Naive thymus-derived CD4-positive, alpha-beta T cell (primary cell): ENCODE measurements at regions of chr1 and their contacts with region 1.

Region 1: DNA sequence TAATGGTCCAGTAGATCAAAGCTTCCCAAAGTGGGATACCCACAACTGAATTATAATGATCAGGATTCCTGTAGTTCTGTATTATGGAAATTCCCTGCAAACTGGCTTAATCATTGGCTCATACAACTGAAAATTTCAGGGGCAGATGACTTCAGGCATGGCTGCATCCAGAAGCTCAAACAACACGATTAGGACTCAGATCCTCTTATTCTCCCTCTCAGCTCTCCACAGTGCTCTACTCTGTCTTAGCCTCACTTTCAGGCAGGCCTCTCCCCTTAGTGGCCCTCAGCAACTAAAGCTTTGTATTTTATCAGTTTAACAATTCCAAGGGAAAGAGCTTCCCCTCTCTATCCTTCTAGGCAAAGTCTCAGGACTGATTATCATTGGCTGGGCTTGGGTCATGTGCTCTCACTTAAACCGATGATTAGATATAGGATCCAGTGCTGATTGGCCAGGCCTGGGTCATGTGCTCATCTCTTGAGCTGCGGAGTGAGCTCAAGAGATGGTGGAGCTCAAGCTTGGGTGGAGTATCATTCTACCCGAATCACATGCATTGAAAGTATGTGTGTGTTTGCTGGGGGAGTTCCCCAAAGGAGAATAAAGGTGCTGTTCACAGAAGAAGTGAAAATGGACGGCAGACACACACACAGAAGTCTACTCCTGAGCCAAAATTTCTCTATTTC is 57.9 kb upstream of the RUNX3 start:
- DNase-seq: no peak
- ATAC-seq: peak; percentile 78
- H3K4me3 ChIP-seq: no peak overlapping the region
- H3K4me3 Mint-ChIP-seq: peak overlapping the region in 8 of 10 donors; percentile 6 to 80 (median 58)
- H3K27ac ChIP-seq: no peak overlapping the region
- H3K27ac Mint-ChIP-seq: peak overlapping the region; percentile 49 to 100 (median 81)
- H3K4me1 ChIP-seq: peaks cover 66 to 96% of the 10 kb centered on the region in 2 donors
- H3K4me1 Mint-ChIP-seq: peaks cover 78 to 99% (median 92%) of the 10 kb centered on the region in 7 donors
- H3K27me3 ChIP-seq: no peaks in the 10 kb centered on the region
- H3K27me3 Mint-ChIP-seq: peaks cover 0 to 10% (median 0%) of the 10 kb centered on the region in 5 donors

Region 2: GRCh38 chr1:24635195-24635843 is 352.7 kb before region 1 on chr1:
- CTCF ChIA-PET with region 1: no interaction called
- POLR2A ChIA-PET with region 1: no interaction called
- intact Hi-C with region 1: no loop called
- DNase-seq: peak in 7 of 9 donors; percentile 39 to 69 (median 62)
- ATAC-seq: peak; percentile 85
- H3K4me3 ChIP-seq: no peak overlapping the region
- H3K4me3 Mint-ChIP-seq: no peak overlapping the region
- H3K27ac ChIP-seq: no peak overlapping the region
- H3K27ac Mint-ChIP-seq: peak overlapping the region in 5 of 9 donors; percentile 0 to 77 (median 64)
- H3K4me1 ChIP-seq: no peaks in the 10 kb centered on the region
- H3K4me1 Mint-ChIP-seq: peaks cover 2 to 14% (median 8%) of the 10 kb centered on the region in 7 donors
- H3K27me3 ChIP-seq: no peaks in the 10 kb centered on the region
- H3K27me3 Mint-ChIP-seq: peaks cover 4 to 21% (median 8%) of the 10 kb centered on the region in 5 donors

Region 3: GRCh38 chr1:24806588-24806987 is 181.4 kb before region 1 on chr1:
- CTCF ChIA-PET with region 1: no interaction called
- POLR2A ChIA-PET with region 1: no interaction called
- intact Hi-C with region 1: no loop called
- DNase-seq: no peak
- ATAC-seq: no peak
- H3K4me3 ChIP-seq: no peak overlapping the region
- H3K4me3 Mint-ChIP-seq: no peak overlapping the region
- H3K27ac ChIP-seq: no peak overlapping the region
- H3K27ac Mint-ChIP-seq: no peak overlapping the region
- H3K4me1 ChIP-seq: no peaks in the 10 kb centered on the region
- H3K4me1 Mint-ChIP-seq: peaks cover 0 to 10% (median 4%) of the 10 kb centered on the region in 7 donors
- H3K27me3 ChIP-seq: peaks cover 0 to 3% of the 10 kb centered on the region in 2 donors
- H3K27me3 Mint-ChIP-seq: no peaks in the 10 kb centered on the region

Region 4: GRCh38 chr1:25006770-25007169 is 18.8 kb after region 1 on chr1:
- CTCF ChIA-PET with region 1: interaction called, 5 read pairs
- POLR2A ChIA-PET with region 1: interaction called, 95 read pairs
- intact Hi-C with region 1: loop called in 1 of 2 experiments (anchors 1 kb)
- DNase-seq: no peak
- ATAC-seq: no peak
- H3K4me3 ChIP-seq: no peak overlapping the region
- H3K4me3 Mint-ChIP-seq: peak overlapping the region in 4 of 10 donors; percentile 25 to 47 (median 36)
- H3K27ac ChIP-seq: no peak overlapping the region
- H3K27ac Mint-ChIP-seq: peak overlapping the region in 4 of 9 donors; percentile 60 to 83 (median 75)
- H3K4me1 ChIP-seq: peaks cover 13 to 24% of the 10 kb centered on the region in 2 donors
- H3K4me1 Mint-ChIP-seq: peaks cover 25 to 72% (median 42%) of the 10 kb centered on the region in 7 donors
- H3K27me3 ChIP-seq: no peaks in the 10 kb centered on the region
- H3K27me3 Mint-ChIP-seq: peaks cover 0 to 2% (median 0%) of the 10 kb centered on the region in 5 donors